MCF 10A (cell line): ENCODE measurements at regions of chr7 and their contacts with region 1.

Region 1: DNA sequence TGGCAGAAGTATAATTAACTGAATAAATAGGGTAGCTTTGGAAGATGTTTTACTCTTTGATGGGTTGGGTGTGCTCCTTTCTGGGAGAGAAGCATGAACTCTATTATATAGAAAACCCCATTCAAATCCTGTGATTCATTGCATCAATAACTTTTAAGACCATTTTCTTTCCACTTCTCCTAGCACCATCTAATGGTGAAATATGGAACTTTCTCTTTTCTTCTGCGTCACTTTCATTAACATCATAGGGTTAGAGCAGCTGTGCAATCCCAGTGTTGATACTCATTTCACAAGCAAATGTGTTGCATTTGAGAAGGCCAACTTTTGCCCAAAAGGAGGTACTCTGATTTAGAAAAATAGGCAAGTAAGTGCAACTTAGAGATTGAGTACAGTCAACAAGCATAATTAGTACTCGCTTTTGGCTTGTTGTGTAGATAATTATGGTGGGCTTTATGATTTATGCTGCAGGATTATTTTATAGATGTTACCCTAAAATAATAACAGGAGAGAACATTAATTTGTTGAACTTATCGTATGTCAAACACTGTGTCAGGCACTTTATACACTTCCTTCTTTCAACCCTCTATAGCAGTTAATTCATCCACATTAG is 92.9 kb downstream of the CPED1 start:
- DNase-seq: peak; percentile 71
- H3K4me3 Mint-ChIP-seq: no peak overlapping the region
- H3K27ac Mint-ChIP-seq: no peak overlapping the region
- H3K4me1 Mint-ChIP-seq: peaks cover 29% of the 10 kb centered on the region
- H3K27me3 Mint-ChIP-seq: no peaks in the 10 kb centered on the region
- CTCF ChIP-seq: peak; percentile 52

Region 2: DNA sequence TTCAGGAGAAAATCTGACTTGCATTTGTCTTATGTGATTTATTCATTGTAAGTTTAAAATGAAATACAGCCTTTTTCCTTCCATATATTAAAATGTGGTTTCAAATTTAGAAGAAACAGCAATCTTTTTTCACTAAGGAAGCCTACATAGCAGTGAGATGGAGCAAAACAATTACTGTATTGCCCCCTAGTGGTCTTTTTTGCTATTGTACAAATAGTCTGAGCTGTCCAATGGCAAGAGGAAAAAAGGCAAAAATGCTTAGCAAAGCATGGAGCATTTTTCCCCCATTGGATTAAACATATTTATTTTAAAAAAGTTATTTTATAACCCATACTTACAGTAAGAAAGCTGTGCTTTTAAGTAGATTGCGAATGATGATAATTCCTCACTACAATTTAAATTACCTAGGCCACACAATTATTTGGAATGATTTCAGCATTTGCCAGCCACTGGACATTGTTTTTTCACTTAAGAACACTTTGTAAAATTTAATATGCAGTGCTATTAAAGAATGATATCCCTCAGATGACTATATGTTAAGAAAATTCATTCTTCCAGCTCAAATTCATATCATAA is 26.6 kb after region 1 on chr7:
- CTCF ChIA-PET with region 1: interaction called, 24 read pairs
- POLR2A ChIA-PET with region 1: no interaction called
- intact Hi-C with region 1: no loop called
- DNase-seq: peak; percentile 70
- H3K4me3 Mint-ChIP-seq: no peak overlapping the region
- H3K27ac Mint-ChIP-seq: no peak overlapping the region
- H3K4me1 Mint-ChIP-seq: no peaks in the 10 kb centered on the region
- H3K27me3 Mint-ChIP-seq: peaks cover 38% of the 10 kb centered on the region
- CTCF ChIP-seq: peak; percentile 57

Region 3: DNA sequence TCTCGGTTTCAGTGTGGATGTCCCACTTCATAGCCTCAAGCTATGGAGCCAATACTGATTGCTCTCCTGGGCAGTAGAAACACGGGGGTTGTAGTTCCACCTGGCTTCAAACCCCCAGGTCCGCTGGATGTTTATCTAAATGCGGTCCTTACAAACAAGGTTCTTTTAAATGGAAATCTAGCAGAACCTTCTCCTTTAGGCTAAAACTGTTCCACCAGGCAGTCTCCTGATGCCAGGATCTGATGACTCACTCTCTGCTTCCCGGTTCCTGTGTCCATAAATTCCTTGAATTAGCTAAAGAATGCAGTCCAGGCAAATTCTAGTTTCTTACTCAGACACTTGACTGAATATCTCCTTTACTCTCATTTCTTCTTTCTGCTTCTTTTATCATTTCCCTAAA is 423.0 kb after region 1 on chr7:
- CTCF ChIA-PET with region 1: no interaction called
- POLR2A ChIA-PET with region 1: no interaction called
- intact Hi-C with region 1: no loop called
- DNase-seq: peak; percentile 77
- H3K4me3 Mint-ChIP-seq: no peak overlapping the region
- H3K27ac Mint-ChIP-seq: peak overlapping the region; percentile 24
- H3K4me1 Mint-ChIP-seq: no peaks in the 10 kb centered on the region
- H3K27me3 Mint-ChIP-seq: no peaks in the 10 kb centered on the region
- CTCF ChIP-seq: no peak